A673 (cell line): ENCODE measurements at regions of chr2 and their contacts with region 1.

Region 1: DNA sequence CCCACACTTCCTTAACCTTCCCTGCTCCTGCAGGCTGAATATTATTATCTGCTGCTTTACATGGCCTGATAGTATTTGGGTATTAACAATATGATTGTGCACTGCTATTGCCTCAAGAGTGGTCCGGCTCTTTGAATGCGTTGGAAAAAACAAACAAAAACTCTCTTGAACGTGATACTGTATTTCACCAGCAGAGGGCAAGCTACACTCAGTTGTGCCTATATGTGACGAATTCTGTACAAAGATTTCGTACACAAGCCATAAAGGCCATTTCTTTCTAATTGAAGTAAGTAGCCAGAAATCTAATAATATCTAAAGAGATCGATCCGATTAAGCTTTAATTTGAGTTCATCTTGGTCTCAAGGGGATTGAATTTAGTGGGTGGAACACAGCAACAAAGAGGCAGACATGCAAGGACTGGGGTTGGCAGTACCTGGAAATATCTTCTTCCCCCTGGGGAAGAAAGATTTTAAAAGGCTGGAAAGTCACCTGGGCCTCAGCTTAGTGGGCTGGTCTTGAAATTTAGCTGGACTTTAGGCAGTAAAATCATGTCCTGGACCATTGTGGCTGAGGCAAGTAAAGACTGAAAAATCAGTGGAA is 49.3 kb upstream of the RAB6D start:
- DNase-seq: peak; percentile 69
- H3K4me3 ChIP-seq: no peak overlapping the region
- H3K27ac ChIP-seq: no peak overlapping the region
- H3K4me1 ChIP-seq: no peaks in the 10 kb centered on the region
- H3K27me3 ChIP-seq: peaks cover 64% of the 10 kb centered on the region
- CTCF ChIP-seq: peak; percentile 82

Region 2: GRCh38 chr2:131580187-131580586 is 166.9 kb after region 1 on chr2:
- CTCF ChIA-PET with region 1: no interaction called
- POLR2A ChIA-PET with region 1: no interaction called
- intact Hi-C with region 1: no loop called
- DNase-seq: no peak
- H3K4me3 ChIP-seq: no peak overlapping the region
- H3K27ac ChIP-seq: no peak overlapping the region
- H3K4me1 ChIP-seq: no peaks in the 10 kb centered on the region
- H3K27me3 ChIP-seq: peaks cover 69% of the 10 kb centered on the region
- CTCF ChIP-seq: no peak

Region 3: DNA sequence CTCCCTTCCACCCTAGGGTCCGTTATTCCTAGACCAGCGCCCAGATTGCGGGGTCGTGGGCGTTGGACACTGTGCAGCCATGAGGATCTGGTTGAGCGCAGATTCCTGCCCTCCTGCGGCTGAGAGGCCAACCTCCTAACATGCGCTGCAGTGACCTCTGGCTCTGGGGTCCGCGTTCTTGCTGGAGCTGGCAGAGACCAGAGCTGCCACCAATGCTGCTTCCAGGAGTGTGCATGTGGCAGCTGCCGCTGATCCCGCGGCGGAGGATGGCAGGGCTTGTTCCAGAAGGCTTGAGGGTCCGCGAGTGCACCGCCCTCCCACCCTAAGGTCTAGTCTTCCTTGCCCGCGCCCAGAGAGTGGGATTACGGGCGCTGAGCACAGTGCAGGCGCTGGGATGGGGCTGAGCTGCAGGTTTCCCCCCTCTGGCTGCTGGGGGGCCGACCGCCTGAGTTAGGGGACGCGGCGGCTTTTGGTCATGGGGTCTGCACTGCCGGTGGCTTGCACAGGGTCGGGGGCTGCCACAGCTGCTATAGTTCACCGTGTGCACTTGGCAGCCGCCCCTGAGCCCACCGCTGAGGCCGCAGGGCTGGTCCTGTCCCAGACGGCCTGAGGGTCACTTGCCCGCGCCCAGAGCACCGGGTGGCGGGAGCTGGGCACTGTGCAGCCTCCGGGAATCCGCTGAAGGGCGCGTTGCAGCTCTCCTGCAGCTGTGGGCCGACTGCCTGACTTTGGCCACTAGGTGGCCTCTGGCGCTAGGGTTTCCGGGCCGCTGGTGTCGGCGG is 260.3 kb after region 1 on chr2:
- CTCF ChIA-PET with region 1: interaction called, 5 read pairs
- POLR2A ChIA-PET with region 1: no interaction called
- intact Hi-C with region 1: loop called (anchors 5 kb)
- DNase-seq: peak; percentile 72
- H3K4me3 ChIP-seq: peak overlapping the region; percentile 30
- H3K27ac ChIP-seq: no peak overlapping the region
- H3K4me1 ChIP-seq: peaks cover 10% of the 10 kb centered on the region
- H3K27me3 ChIP-seq: peaks cover 35% of the 10 kb centered on the region
- CTCF ChIP-seq: peak; percentile 82